Naive thymus-derived CD4-positive, alpha-beta T cell (primary cell): ENCODE measurements at regions of chr1 and their contacts with region 1.

Region 1: DNA sequence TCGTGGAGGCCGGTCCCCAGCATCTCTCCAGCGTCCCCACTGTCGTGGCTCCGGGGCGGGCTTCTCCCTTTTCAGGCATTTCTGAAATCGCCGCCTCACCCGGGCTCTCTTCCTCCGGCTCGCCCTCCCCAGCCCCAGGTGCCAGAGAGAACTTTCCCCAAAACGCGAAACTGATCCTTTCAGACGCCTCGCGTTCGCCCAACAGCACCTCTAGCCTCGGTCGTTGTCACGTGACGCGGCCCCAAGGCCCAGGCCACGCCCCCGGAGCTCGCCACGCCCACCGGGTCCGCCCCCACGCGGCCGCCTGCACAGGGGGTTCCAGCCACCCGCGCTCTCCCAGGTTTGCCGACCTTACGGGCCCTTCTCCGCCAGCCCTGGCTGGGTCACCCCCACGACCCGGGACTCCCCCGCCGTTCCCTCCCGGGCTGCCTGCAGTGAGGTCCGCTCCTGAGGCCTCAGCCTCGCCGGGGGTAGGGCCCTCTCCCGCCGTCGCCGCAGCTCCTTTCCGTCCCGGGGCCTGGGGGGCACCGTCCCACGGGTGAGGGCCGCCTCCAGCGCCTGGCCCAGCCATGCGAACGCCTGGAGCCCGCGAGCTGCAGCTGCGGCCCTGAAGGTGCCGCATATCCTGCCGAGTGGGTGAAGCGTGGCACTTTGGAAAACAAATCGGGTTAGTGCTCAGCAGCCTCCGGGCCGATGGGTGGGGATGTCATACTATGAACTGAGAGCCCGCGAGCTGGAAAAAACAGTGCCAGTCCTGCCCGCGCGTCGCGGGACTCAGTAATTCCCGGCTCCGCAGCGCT is 21.0 kb downstream of the H3-3A start:
- DNase-seq: peak; percentile 79 to 98 (median 87)
- ATAC-seq: peak; percentile 98
- H3K4me3 ChIP-seq: peak overlapping the region; percentile 77
- H3K4me3 Mint-ChIP-seq: peak overlapping the region; percentile 78 to 94 (median 91)
- H3K27ac ChIP-seq: peak overlapping the region; percentile 65
- H3K27ac Mint-ChIP-seq: peak overlapping the region; percentile 25 to 93 (median 75)
- H3K4me1 ChIP-seq: peaks cover 5 to 8% of the 10 kb centered on the region in 2 donors
- H3K4me1 Mint-ChIP-seq: peaks cover 5 to 12% (median 8%) of the 10 kb centered on the region in 7 donors
- H3K27me3 ChIP-seq: no peaks in the 10 kb centered on the region
- H3K27me3 Mint-ChIP-seq: peaks cover 0 to 10% (median 0%) of the 10 kb centered on the region in 5 donors

Region 2: DNA sequence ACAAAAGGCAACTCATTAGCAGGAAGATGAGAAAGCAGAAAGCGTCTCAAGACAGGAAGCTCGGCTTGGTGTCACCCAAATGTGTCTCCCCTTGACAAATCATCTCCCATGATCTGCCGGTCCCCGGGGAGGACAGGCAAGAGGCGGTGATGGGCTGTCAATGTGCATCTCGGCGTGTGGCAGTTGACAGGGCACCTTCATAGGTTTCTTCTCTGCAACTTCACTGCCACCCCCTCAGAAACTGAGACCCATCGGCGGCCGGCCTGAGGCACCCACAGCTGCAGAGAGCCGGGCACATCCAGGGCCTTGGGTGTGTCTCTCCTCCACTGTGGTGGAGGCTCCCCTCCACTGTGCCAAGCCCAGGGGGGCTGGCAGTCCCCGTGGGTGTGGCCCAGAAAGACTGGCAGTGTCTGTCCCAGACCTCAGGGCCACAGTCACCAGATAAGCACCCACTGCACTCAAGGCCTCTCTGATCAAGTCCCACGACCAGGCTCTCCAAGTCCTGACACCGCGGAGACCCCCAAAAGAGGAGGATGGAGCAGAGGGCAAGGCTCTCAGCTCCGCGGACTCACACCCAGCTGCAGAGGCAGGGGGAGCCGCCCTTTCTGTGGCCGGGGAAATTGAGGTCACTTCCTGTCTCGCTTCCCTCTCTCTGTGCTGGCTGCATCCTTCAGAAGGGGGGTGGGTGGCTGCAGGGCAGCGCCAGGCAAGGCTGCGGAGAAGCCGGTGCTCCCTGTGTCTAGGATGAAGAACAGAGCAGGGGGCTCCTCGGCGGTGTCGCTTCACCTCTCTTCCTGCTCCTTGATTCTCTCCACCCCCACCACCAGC is 616.1 kb before region 1 on chr1:
- CTCF ChIA-PET with region 1: no interaction called
- POLR2A ChIA-PET with region 1: no interaction called
- intact Hi-C with region 1: loop called in 1 of 2 experiments (anchors 2 kb)
- DNase-seq: peak; percentile 57 to 85 (median 81)
- ATAC-seq: peak; percentile 91
- H3K4me3 ChIP-seq: peak overlapping the region; percentile 94
- H3K4me3 Mint-ChIP-seq: peak overlapping the region; percentile 81 to 94 (median 92)
- H3K27ac ChIP-seq: peak overlapping the region; percentile 85
- H3K27ac Mint-ChIP-seq: peak overlapping the region; percentile 89 to 98 (median 98)
- H3K4me1 ChIP-seq: peaks cover 22 to 40% of the 10 kb centered on the region in 2 donors
- H3K4me1 Mint-ChIP-seq: peaks cover 33 to 65% (median 48%) of the 10 kb centered on the region in 7 donors
- H3K27me3 ChIP-seq: no peaks in the 10 kb centered on the region
- H3K27me3 Mint-ChIP-seq: no peaks in the 10 kb centered on the region

Region 3: GRCh38 chr1:226069811-226070489 is 13.6 kb before region 1 on chr1:
- CTCF ChIA-PET with region 1: interaction called, 14 read pairs
- POLR2A ChIA-PET with region 1: interaction called, 41 read pairs
- intact Hi-C with region 1: loop called in 1 of 2 experiments (anchors 1 kb)
- DNase-seq: no peak
- ATAC-seq: no peak
- H3K4me3 ChIP-seq: no peak overlapping the region
- H3K4me3 Mint-ChIP-seq: peak overlapping the region in 9 of 10 donors; percentile 5 to 61 (median 40)
- H3K27ac ChIP-seq: peak overlapping the region; percentile 24
- H3K27ac Mint-ChIP-seq: peak overlapping the region in 8 of 9 donors; percentile 9 to 89 (median 78)
- H3K4me1 ChIP-seq: peaks cover 43 to 48% of the 10 kb centered on the region in 2 donors
- H3K4me1 Mint-ChIP-seq: peaks cover 42 to 73% (median 62%) of the 10 kb centered on the region in 7 donors
- H3K27me3 ChIP-seq: no peaks in the 10 kb centered on the region
- H3K27me3 Mint-ChIP-seq: no peaks in the 10 kb centered on the region

Region 4: DNA sequence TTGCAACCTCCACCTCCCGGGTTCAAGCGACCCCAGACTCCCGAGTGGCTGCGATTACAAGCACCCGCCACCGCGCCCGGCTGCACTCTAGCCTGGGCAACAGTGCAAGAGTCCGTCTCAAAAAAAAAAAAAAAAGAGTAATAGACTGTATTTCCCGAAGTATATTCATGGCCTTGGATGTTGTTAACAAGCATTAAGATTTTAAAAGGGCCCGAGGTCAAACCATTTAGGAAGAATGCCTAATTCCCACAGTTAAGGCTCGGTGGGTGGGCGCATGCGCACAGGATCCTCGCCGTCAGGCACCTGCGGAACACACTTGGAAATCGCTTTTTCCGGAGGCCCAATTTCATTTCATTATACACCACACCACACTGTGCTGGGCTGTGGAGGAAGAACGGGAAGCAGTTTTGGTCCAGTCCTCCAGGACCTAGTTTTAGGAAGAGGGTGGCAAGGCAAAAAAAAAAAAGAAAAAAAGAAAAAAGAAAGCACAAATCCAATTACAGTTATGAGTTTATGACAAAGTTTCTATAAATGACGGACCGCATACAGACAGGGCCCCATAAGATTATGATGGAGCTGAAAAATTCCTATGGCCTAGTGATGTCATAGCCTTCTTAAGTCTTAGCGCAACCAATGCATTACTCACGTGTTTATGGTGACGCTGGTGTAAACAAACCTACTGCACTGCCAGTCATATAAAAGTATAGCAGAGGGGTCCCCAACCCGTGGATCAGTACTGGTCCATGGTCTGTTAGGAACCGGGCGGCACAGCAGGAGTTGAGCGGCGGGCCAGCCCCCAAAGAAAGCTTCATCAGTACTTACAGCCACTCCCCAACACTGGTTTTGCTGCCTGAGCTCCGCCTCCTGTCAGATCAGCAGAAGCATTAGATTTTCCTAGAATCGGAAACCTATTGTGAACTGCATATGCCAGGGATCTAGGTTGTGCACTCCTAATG is 17.2 kb after region 1 on chr1:
- CTCF ChIA-PET with region 1: interaction called, 5 read pairs
- POLR2A ChIA-PET with region 1: no interaction called
- intact Hi-C with region 1: loop called (anchors 1 to 2 kb)
- DNase-seq: peak in 6 of 9 donors; percentile 31 to 56 (median 44)
- ATAC-seq: peak; percentile 70
- H3K4me3 ChIP-seq: peak overlapping the region; percentile 58
- H3K4me3 Mint-ChIP-seq: peak overlapping the region; percentile 82 to 94 (median 88)
- H3K27ac ChIP-seq: peak overlapping the region; percentile 42
- H3K27ac Mint-ChIP-seq: peak overlapping the region in 7 of 9 donors; percentile 17 to 89 (median 76)
- H3K4me1 ChIP-seq: no peaks in the 10 kb centered on the region
- H3K4me1 Mint-ChIP-seq: peaks cover 7 to 17% (median 13%) of the 10 kb centered on the region in 7 donors
- H3K27me3 ChIP-seq: no peaks in the 10 kb centered on the region
- H3K27me3 Mint-ChIP-seq: peaks cover 0 to 15% (median 4%) of the 10 kb centered on the region in 5 donors

Region 5: GRCh38 chr1:226109829-226110248 is 26.3 kb after region 1 on chr1:
- CTCF ChIA-PET with region 1: interaction called, 3 read pairs
- POLR2A ChIA-PET with region 1: interaction called, 5 read pairs
- intact Hi-C with region 1: loop called (anchors 1 kb)
- DNase-seq: peak; percentile 44 to 84 (median 59)
- ATAC-seq: peak; percentile 92
- H3K4me3 ChIP-seq: peak overlapping the region; percentile 59
- H3K4me3 Mint-ChIP-seq: peak overlapping the region; percentile 88 to 96 (median 92)
- H3K27ac ChIP-seq: peak overlapping the region; percentile 67
- H3K27ac Mint-ChIP-seq: peak overlapping the region; percentile 85 to 93 (median 89)
- H3K4me1 ChIP-seq: no peaks in the 10 kb centered on the region
- H3K4me1 Mint-ChIP-seq: peaks cover 7 to 26% (median 21%) of the 10 kb centered on the region in 7 donors
- H3K27me3 ChIP-seq: no peaks in the 10 kb centered on the region
- H3K27me3 Mint-ChIP-seq: peaks cover 0 to 6% (median 0%) of the 10 kb centered on the region in 5 donors